ENCODE measurements at regions of chr7 and their contacts with region 1.

Region 1: GRCh38 chr7:25259587-25260243 is 31.4 kb upstream of the NPVF start:
- DNase-seq: peak; percentile 61
- H3K4me3 ChIP-seq: no peak overlapping the region
- H3K27ac ChIP-seq: no peak overlapping the region
- H3K4me1 ChIP-seq: no peaks in the 10 kb centered on the region
- H3K27me3 ChIP-seq: no peaks in the 10 kb centered on the region
- CTCF ChIP-seq: peak; percentile 77 to 82
- POLR2A ChIP-seq: no peak

Region 2: DNA sequence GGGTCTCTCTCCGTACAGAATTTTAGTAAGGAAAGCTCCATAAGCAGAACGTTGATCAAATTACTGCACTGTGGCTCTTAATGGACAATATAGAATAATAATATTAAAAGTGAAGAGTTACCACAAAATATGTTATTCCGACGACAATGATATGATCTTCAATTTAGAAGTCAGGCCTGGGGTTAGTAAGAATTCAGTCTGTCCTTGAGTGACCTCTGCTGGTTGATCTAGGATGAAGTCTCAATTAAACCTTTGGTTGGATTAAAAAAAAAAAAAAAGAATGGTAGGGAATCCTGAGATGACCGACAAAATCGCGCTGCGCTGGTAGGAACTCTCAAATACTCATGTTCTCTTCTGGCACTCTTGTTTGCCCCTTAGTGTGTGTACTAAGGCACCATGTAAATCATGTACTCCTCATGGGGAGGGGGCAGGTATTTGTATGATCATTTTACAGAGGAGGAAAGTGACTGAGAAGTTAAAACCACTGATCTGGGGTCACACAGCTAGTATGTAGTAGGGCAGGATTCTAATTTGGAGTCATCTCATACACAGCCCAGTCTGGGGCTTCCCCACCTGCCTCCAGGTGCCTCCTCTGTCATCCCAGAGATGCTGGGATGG is 129.9 kb after region 1 on chr7:
- CTCF ChIA-PET with region 1: interaction called, 119 read pairs
- POLR2A ChIA-PET with region 1: no interaction called
- dilution Hi-C with region 1: no loop called
- intact Hi-C with region 1: loop called (anchors 1 kb)
- DNase-seq: peak; percentile 44
- H3K4me3 ChIP-seq: no peak overlapping the region
- H3K27ac ChIP-seq: no peak overlapping the region
- H3K4me1 ChIP-seq: no peaks in the 10 kb centered on the region
- H3K27me3 ChIP-seq: peaks cover 2 to 3% of the 10 kb centered on the region in 2 experiments
- CTCF ChIP-seq: peak; percentile 23 to 40
- POLR2A ChIP-seq: no peak